CD8-positive, alpha-beta memory T cell (primary cell): ENCODE measurements at regions of chr7 and their contacts with region 1.

Region 1: GRCh38 chr7:24979863-24980533 is at the start of gene OSBPL3:
- DNase-seq: peak; percentile 92 to 98 (median 97)
- H3K4me3 ChIP-seq: peak within 1 kb of the TSS; percentile 96
- H3K4me3 Mint-ChIP-seq: peak within 1 kb of the TSS; percentile 87 to 99 (median 97)
- H3K27ac ChIP-seq: peak within 1 kb of the TSS; percentile 87
- H3K27ac Mint-ChIP-seq: peak within 1 kb of the TSS; percentile 79 to 99 (median 95)
- H3K4me1 ChIP-seq: peaks cover 45% of the 10 kb centered on the region
- H3K4me1 Mint-ChIP-seq: peaks cover 51 to 64% (median 64%) of the 10 kb centered on the region in 3 donors
- H3K27me3 ChIP-seq: no peaks in the 10 kb centered on the region
- H3K27me3 Mint-ChIP-seq: no peaks in the 10 kb centered on the region
- total RNA-seq, gene OSBPL3: 71.7 to 72.5 TPM

Region 2: GRCh38 chr7:24825931-24826661 is 153.9 kb before region 1 on chr7:
- CTCF ChIA-PET with region 1: interaction called, 86 read pairs
- POLR2A ChIA-PET with region 1: interaction called, 51 read pairs
- DNase-seq: peak in 1 of 5 donors; percentile 11
- H3K4me3 ChIP-seq: peak overlapping the region; percentile 17
- H3K4me3 Mint-ChIP-seq: peak overlapping the region in 6 of 7 donors; percentile 65 to 83 (median 73)
- H3K27ac ChIP-seq: no peak overlapping the region
- H3K27ac Mint-ChIP-seq: peak overlapping the region; percentile 89 to 98 (median 94)
- H3K4me1 ChIP-seq: peaks cover 38% of the 10 kb centered on the region
- H3K4me1 Mint-ChIP-seq: peaks cover 62 to 77% (median 72%) of the 10 kb centered on the region in 3 donors
- H3K27me3 ChIP-seq: no peaks in the 10 kb centered on the region
- H3K27me3 Mint-ChIP-seq: peaks cover 0 to 2% of the 10 kb centered on the region in 2 donors

Region 3: GRCh38 chr7:24963218-24963617 is 16.8 kb before region 1 on chr7:
- CTCF ChIA-PET with region 1: interaction called, 17 read pairs
- POLR2A ChIA-PET with region 1: interaction called, 4 read pairs
- DNase-seq: peak in 1 of 5 donors; percentile 18
- H3K4me3 ChIP-seq: no peak overlapping the region
- H3K4me3 Mint-ChIP-seq: peak overlapping the region in 2 of 7 donors; percentile 3 to 15
- H3K27ac ChIP-seq: no peak overlapping the region
- H3K27ac Mint-ChIP-seq: peak overlapping the region in 5 of 8 donors; percentile 23 to 70 (median 56)
- H3K4me1 ChIP-seq: peaks cover 54% of the 10 kb centered on the region
- H3K4me1 Mint-ChIP-seq: peaks cover 82 to 93% (median 89%) of the 10 kb centered on the region in 3 donors
- H3K27me3 ChIP-seq: no peaks in the 10 kb centered on the region
- H3K27me3 Mint-ChIP-seq: no peaks in the 10 kb centered on the region

Region 4: DNA sequence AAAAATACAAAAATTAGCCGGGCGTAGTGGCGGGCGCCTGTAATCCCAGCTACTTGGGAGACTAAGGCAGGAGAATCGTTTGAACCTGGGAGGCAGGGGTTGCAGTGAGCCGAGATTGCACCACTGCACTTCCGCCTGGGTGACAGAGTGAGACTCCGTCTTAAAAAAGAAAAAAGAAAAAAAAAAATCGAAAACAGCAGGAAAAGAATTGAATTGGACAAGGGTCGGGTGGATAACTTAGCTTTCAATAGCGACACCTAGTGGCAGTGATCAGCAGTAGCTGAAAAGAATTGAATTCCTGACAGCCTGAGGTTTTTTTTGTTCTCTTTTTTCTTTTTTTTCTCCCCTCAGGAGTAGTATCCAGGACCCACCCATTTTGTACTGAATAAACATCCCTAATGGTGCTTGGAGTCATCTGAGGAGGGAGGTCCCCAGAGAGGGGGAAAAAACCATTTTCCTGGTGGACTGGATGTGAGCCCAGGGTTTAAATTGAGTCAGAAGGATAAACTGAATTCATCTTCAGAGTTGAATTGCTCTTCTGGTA is 90.0 kb after region 1 on chr7:
- CTCF ChIA-PET with region 1: interaction called, 19 read pairs
- POLR2A ChIA-PET with region 1: interaction called, 7 read pairs
- DNase-seq: peak; percentile 12 to 60 (median 49)
- H3K4me3 ChIP-seq: no peak overlapping the region
- H3K4me3 Mint-ChIP-seq: no peak overlapping the region
- H3K27ac ChIP-seq: no peak overlapping the region
- H3K27ac Mint-ChIP-seq: no peak overlapping the region
- H3K4me1 ChIP-seq: no peaks in the 10 kb centered on the region
- H3K4me1 Mint-ChIP-seq: peaks cover 2 to 11% (median 9%) of the 10 kb centered on the region in 3 donors
- H3K27me3 ChIP-seq: no peaks in the 10 kb centered on the region
- H3K27me3 Mint-ChIP-seq: no peaks in the 10 kb centered on the region